CD4-positive, alpha-beta memory T cell (primary cell): ENCODE measurements at regions of chr9 and their contacts with region 1.

Region 1: GRCh38 chr9:128159784-128160602 is at the start of gene BBLN:
- DNase-seq: peak; percentile 87 to 91 (median 90)
- H3K4me3 ChIP-seq: peak within 1 kb of the TSS; percentile 89 to 90
- H3K4me3 Mint-ChIP-seq: peak within 1 kb of the TSS; percentile 81 to 90 (median 82)
- H3K27ac ChIP-seq: peak within 1 kb of the TSS; percentile 89
- H3K27ac Mint-ChIP-seq: peak within 1 kb of the TSS; percentile 89 to 97 (median 93)
- H3K4me1 ChIP-seq: peaks cover 16% of the 10 kb centered on the region
- H3K4me1 Mint-ChIP-seq: peaks cover 9 to 27% (median 20%) of the 10 kb centered on the region in 4 donors
- H3K27me3 ChIP-seq: no peaks in the 10 kb centered on the region
- H3K27me3 Mint-ChIP-seq: no peaks in the 10 kb centered on the region
- total RNA-seq, gene BBLN: 47.8 to 50.5 TPM

Region 2: GRCh38 chr9:128191406-128192046 is 31.5 kb after region 1 on chr9 and contains the start of gene CIZ1:
- CTCF ChIA-PET with region 1: interaction called, 8 read pairs
- POLR2A ChIA-PET with region 1: interaction called, 21 read pairs
- intact Hi-C with region 1: loop called (anchors 1 kb)
- DNase-seq: peak; percentile 61 to 77 (median 70)
- H3K4me3 ChIP-seq: peak within 1 kb of the TSS; percentile 81 to 82
- H3K4me3 Mint-ChIP-seq: peak within 1 kb of the TSS; percentile 88 to 98 (median 94)
- H3K27ac ChIP-seq: peak within 1 kb of the TSS; percentile 80
- H3K27ac Mint-ChIP-seq: peak within 1 kb of the TSS; percentile 76 to 97 (median 90)
- H3K4me1 ChIP-seq: peaks cover 22% of the 10 kb centered on the region
- H3K4me1 Mint-ChIP-seq: peaks cover 14 to 35% (median 27%) of the 10 kb centered on the region in 4 donors
- H3K27me3 ChIP-seq: no peaks in the 10 kb centered on the region
- H3K27me3 Mint-ChIP-seq: no peaks in the 10 kb centered on the region
- total RNA-seq, gene CIZ1: 156 to 165 TPM

Region 3: GRCh38 chr9:128911529-128912035 is 751.6 kb after region 1 on chr9:
- CTCF ChIA-PET with region 1: no interaction called
- POLR2A ChIA-PET with region 1: no interaction called
- intact Hi-C with region 1: no loop called
- DNase-seq: no peak
- H3K4me3 ChIP-seq: no peak overlapping the region
- H3K4me3 Mint-ChIP-seq: no peak overlapping the region
- H3K27ac ChIP-seq: no peak overlapping the region
- H3K27ac Mint-ChIP-seq: peak overlapping the region in 5 of 7 donors; percentile 15 to 81 (median 64)
- H3K4me1 ChIP-seq: peaks cover 57% of the 10 kb centered on the region
- H3K4me1 Mint-ChIP-seq: peaks cover 19 to 71% (median 39%) of the 10 kb centered on the region in 4 donors
- H3K27me3 ChIP-seq: no peaks in the 10 kb centered on the region
- H3K27me3 Mint-ChIP-seq: no peaks in the 10 kb centered on the region